ENCODE measurements at regions of chr16 and their contacts with region 1.

Region 1: DNA sequence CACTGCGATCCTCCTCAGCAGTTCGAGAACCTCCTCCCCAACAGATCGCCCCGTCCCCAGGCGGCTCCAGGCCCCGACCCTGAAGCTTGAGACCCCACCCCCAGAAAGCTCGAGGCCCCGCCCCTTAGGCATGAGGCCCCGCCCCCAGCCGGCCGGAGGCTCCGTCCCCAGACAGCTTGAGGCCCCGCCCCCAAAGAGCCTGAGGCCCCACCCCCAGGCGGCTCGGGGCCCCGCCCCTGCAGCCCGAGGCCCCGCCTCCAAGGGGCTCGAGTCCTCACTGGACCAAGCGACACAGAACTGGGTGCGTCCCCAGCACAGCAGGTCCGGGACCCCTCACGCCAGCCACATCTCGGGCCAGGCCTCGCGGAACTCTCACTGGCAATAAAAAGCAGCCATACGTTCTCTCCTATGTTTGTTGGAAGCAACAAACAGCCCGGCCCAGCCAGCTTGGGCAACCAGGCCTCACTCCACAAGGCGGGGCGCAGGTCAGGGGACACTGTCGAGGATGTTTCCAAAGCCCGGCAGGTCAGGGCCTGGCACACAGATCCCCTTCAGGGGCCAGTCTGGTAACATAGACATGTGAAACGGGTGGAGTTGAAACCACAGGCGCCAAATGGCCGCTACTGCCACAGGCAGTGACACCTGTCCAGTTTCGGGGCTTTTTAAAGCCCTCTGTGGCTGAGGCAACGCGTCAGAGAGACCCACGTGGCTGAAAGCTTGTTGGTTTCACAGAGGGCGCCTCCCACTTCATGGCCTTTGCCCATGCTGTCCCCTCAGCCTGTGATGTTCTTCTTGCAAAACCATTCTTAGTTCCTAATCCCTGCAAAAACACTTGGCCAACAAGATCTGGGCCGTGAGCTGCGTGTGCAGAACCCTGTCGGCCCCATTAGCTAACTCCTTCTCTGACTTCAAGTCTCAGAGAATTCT is 224.2 kb downstream of the PARN start:
- DNase-seq: no peak
- H3K4me3 ChIP-seq: no peak overlapping the region
- CTCF ChIP-seq: no peak

Region 2: GRCh38 chr16:14315683-14316320 is 90.1 kb before region 1 on chr16:
- in situ Hi-C with region 1: loop called (anchors 5 kb)
- DNase-seq: no peak
- H3K4me3 ChIP-seq: no peak overlapping the region
- CTCF ChIP-seq: no peak

Region 3: GRCh38 chr16:14513389-14514107 is 107.7 kb after region 1 on chr16:
- in situ Hi-C with region 1: no loop called
- DNase-seq: no peak
- H3K4me3 ChIP-seq: no peak overlapping the region
- CTCF ChIP-seq: no peak

Measured in astrocyte of the cerebellum (primary cell).